ENCODE measurements at regions of chr4 and their contacts with region 1.

Region 1: GRCh38 chr4:24980064-24980690 is 50.6 kb downstream of the LGI2 start:
- DNase-seq: peak; percentile 46
- H3K4me3 Mint-ChIP-seq: no peak overlapping the region
- H3K27ac Mint-ChIP-seq: no peak overlapping the region
- H3K4me1 Mint-ChIP-seq: peaks cover 10% of the 10 kb centered on the region
- H3K27me3 Mint-ChIP-seq: peaks cover 10% of the 10 kb centered on the region

Region 2: GRCh38 chr4:24877868-24878637 is 102.1 kb before region 1 on chr4:
- CTCF ChIA-PET with region 1: no interaction called
- POLR2A ChIA-PET with region 1: no interaction called
- DNase-seq: no peak
- H3K4me3 Mint-ChIP-seq: no peak overlapping the region
- H3K27ac Mint-ChIP-seq: no peak overlapping the region
- H3K4me1 Mint-ChIP-seq: no peaks in the 10 kb centered on the region
- H3K27me3 Mint-ChIP-seq: no peaks in the 10 kb centered on the region

Region 3: GRCh38 chr4:24993551-24994080 is 13.4 kb after region 1 on chr4:
- CTCF ChIA-PET with region 1: interaction called, 13 read pairs
- POLR2A ChIA-PET with region 1: no interaction called
- DNase-seq: no peak
- H3K4me3 Mint-ChIP-seq: no peak overlapping the region
- H3K27ac Mint-ChIP-seq: no peak overlapping the region
- H3K4me1 Mint-ChIP-seq: no peaks in the 10 kb centered on the region
- H3K27me3 Mint-ChIP-seq: no peaks in the 10 kb centered on the region

Region 4: DNA sequence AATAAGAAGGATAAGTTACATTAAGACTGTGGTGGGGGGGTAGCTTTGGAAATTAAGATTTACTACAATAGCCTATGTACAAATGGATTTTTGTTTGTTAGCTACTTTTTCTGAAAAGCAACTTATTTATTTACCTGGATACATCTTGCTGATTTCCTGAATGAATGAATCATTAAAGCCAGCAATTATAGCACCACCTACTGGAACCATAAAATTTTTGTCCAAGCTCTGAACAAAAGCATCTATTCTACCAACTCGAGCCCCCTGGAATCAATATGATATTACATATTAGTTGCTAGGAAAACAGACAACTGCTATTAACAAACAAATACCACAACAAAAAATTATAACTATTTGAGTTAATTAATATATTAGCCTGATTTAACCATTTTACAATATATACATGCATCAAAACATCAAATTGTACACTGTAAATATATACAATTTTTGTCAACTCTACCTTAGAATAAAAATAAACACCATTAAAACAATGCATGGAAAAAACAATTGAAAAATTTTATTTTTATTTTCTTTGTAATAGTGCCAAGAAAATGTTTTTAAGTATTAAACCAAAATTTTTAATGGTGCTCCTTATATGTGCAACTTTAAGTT is 164.8 kb after region 1 on chr4:
- CTCF ChIA-PET with region 1: interaction called, 26 read pairs
- POLR2A ChIA-PET with region 1: interaction called, 5 read pairs
- DNase-seq: no peak
- H3K4me3 Mint-ChIP-seq: no peak overlapping the region
- H3K27ac Mint-ChIP-seq: no peak overlapping the region
- H3K4me1 Mint-ChIP-seq: no peaks in the 10 kb centered on the region
- H3K27me3 Mint-ChIP-seq: no peaks in the 10 kb centered on the region

Region 5: DNA sequence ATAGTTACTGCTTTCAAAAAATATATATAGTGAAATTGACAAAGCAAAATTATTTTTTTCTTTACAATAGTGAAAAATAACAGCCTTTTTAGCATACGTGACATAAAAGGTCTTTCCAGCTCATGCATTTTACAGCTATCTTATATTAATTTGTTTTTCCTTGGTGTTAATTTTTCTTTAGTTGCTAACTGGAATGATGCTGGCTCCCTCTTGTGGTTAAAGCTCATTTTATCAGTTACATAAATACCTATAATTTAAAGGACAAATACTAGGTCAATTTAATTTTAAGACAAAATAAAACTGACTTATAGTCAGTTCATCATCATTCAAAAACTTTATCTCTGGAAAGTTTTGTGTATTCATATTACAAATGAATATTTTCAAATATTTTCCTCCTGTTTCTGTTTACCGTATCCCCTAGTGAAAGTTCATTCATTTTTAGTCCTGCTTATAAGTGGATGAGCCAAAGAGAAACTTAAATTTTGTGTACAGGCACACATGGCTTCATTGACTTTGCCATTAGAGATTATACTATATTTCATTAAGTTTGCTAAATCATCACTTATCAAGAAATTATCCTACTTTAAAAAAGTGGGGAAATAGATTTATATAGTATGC is 386.9 kb after region 1 on chr4:
- CTCF ChIA-PET with region 1: interaction called, 13 read pairs
- POLR2A ChIA-PET with region 1: interaction called, 3 read pairs
- DNase-seq: no peak
- H3K4me3 Mint-ChIP-seq: no peak overlapping the region
- H3K27ac Mint-ChIP-seq: no peak overlapping the region
- H3K4me1 Mint-ChIP-seq: no peaks in the 10 kb centered on the region
- H3K27me3 Mint-ChIP-seq: no peaks in the 10 kb centered on the region